ENCODE measurements at regions of chr22 and their contacts with region 1.

Region 1: DNA sequence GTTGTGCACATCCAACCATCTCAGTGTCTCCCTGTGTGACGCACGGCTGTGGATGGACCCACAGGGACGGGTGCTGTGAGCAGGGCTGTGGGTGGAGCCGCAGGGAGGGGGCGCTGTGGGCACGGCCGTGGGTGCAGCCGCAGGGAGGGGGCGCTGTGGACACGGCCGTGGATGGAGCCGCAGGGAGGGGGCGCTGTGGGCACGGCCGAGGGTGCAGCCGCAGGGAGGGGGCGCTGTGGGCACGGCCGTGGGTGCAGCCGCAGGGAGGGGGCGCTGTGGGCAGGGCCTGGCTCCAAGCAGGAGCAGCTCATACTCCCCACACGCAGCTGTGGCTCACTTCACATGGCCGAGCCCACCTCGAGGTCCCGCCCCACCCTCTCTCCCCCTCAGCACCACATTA is 6.0 kb upstream of the MAPK11 start:
- DNase-seq: peak; percentile 48
- H3K4me3 Mint-ChIP-seq: no peak overlapping the region
- H3K27ac Mint-ChIP-seq: no peak overlapping the region
- H3K4me1 Mint-ChIP-seq: peaks cover 6% of the 10 kb centered on the region
- H3K27me3 Mint-ChIP-seq: peaks cover 8% of the 10 kb centered on the region

Region 2: GRCh38 chr22:50141891-50142363 is 134.2 kb before region 1 on chr22:
- CTCF ChIA-PET with region 1: no interaction called
- POLR2A ChIA-PET with region 1: no interaction called
- DNase-seq: no peak
- H3K4me3 Mint-ChIP-seq: no peak overlapping the region
- H3K27ac Mint-ChIP-seq: no peak overlapping the region
- H3K4me1 Mint-ChIP-seq: peaks cover 1% of the 10 kb centered on the region
- H3K27me3 Mint-ChIP-seq: peaks cover 3% of the 10 kb centered on the region

Region 3: DNA sequence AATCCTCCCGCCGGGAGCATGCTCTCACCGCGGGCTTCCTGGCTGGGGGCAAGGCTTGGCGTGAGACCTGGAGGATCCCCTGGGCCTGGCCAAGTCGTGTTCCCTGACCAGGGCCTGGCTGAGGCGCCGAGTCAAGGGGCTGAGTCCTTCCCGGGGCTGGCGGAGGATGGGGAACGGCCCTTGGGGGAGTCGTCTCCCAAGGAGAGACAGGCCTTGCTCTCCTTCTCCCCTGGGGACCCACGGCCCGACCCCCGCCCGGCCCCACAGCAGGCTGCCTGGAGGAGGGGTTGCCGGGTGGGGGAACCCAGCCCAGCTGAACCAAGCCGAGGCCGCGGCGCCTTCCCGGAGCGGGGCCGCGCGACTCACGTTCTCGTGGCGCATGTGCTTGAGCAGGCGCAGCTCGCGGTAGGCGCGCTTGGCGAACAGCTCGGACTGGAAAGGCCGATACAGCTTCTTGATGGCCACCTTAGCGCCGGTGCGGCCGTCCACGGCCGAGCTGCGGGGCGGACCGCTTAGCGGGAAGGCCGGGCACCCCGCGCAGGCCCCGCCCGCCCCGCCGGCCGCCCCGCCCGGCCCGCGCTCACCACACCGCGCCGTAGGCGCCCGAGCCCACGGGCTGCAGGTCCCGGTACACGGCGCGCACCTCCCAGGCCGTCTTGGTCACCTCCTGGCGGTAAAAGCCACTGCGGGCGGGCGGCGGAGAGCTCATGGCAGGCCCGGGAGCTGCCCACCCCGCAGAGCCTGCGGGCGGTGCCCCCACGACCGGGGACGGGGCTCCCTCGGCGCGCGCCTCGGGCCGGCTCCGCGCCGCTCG is 15.1 kb before region 1 on chr22:
- CTCF ChIA-PET with region 1: interaction called, 25 read pairs
- POLR2A ChIA-PET with region 1: no interaction called
- DNase-seq: peak; percentile 29
- H3K4me3 Mint-ChIP-seq: no peak overlapping the region
- H3K27ac Mint-ChIP-seq: no peak overlapping the region
- H3K4me1 Mint-ChIP-seq: peaks cover 6% of the 10 kb centered on the region
- H3K27me3 Mint-ChIP-seq: peaks cover 15% of the 10 kb centered on the region

Region 4: GRCh38 chr22:50303848-50304527 is 27.8 kb after region 1 on chr22:
- CTCF ChIA-PET with region 1: interaction called, 20 read pairs
- POLR2A ChIA-PET with region 1: no interaction called
- DNase-seq: no peak
- H3K4me3 Mint-ChIP-seq: no peak overlapping the region
- H3K27ac Mint-ChIP-seq: no peak overlapping the region
- H3K4me1 Mint-ChIP-seq: peaks cover 16% of the 10 kb centered on the region
- H3K27me3 Mint-ChIP-seq: peaks cover 17% of the 10 kb centered on the region

Region 5: DNA sequence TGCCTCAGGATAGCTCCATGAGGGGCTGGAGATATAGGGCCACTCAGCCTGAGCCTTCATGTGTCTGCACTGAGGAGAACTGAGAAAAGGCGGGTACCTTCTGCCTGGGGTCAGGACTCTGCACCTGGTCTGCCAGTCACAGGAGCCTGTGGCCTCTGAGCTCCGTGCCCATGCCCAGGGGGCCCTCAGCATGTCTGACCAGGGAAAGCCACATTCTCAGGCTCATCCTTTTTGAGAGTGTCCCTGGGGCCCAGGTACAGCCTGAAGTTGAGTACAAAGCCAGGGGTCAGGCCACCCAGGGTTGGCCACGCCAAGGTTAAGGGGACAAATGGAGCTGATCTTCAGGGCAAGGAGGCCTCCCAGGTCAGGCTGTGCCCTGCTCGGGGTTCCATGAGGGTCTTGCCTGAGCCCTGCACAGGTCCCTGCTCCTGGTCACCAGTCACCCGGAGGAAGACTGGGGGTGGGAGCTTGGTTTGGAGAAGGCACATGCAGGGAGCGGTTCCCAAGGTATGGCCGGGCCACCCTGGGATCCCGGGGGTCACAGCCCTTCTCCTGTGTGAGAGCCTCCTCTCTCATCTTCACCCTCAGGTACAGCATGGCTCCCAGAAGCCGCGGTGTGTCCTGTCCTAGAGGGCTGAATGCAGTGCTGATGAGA is 44.7 kb after region 1 on chr22:
- CTCF ChIA-PET with region 1: interaction called, 54 read pairs
- POLR2A ChIA-PET with region 1: no interaction called
- DNase-seq: no peak
- H3K4me3 Mint-ChIP-seq: no peak overlapping the region
- H3K27ac Mint-ChIP-seq: no peak overlapping the region
- H3K4me1 Mint-ChIP-seq: peaks cover 1% of the 10 kb centered on the region
- H3K27me3 Mint-ChIP-seq: peaks cover 9% of the 10 kb centered on the region

Region 6: GRCh38 chr22:50341977-50342650 is 66.0 kb after region 1 on chr22:
- CTCF ChIA-PET with region 1: interaction called, 17 read pairs
- POLR2A ChIA-PET with region 1: no interaction called
- DNase-seq: peak; percentile 93
- H3K4me3 Mint-ChIP-seq: peak overlapping the region; percentile 79
- H3K27ac Mint-ChIP-seq: peak overlapping the region; percentile 94
- H3K4me1 Mint-ChIP-seq: peaks cover 11% of the 10 kb centered on the region
- H3K27me3 Mint-ChIP-seq: no peaks in the 10 kb centered on the region

Region 7: DNA sequence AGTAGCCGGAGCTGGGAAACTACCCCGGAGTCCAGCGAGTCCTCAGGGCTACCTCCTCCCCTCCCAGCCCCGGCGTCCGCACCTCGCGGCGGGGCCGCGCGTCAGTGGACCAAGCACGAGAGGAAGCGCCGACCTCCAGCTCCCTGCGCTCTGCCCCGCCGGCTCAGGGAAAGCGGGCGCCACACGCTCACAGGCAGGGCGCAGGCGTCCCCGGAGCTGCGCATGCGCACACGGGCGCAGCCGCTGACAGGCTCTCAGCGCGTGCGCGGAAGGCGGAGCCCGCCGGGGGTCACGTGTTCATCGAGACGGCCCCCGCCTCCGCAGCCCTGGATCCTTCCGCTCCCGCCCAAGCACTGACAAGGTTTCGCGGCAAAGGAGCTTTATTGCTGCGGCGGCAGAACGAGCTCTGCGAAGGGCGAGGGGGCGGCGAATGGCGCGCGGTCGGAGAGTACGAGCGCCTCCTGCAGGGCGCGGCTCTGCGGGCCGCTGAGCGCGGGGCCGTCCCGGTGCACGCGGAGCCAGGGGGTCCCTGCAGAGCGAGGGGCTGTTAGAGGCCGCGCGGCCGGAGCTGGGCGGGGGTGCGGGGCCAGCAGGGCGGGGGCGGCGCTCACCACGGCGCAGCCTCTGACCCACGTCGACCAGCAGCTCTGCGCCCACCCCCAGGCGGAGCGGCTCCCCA is 249.4 kb after region 1 on chr22 and contains the start of gene SCO2:
- CTCF ChIA-PET with region 1: interaction called, 12 read pairs
- POLR2A ChIA-PET with region 1: no interaction called
- DNase-seq: peak; percentile 97
- H3K4me3 Mint-ChIP-seq: peak within 1 kb of the TSS; percentile 80
- H3K27ac Mint-ChIP-seq: peak within 1 kb of the TSS; percentile 93
- H3K4me1 Mint-ChIP-seq: peaks cover 37% of the 10 kb centered on the region
- H3K27me3 Mint-ChIP-seq: no peaks in the 10 kb centered on the region
- total RNA-seq, gene SCO2: 2.8 to 10.5 TPM